K562 (cell line): ENCODE measurements at regions of chr12 and their contacts with region 1.

Region 1: DNA sequence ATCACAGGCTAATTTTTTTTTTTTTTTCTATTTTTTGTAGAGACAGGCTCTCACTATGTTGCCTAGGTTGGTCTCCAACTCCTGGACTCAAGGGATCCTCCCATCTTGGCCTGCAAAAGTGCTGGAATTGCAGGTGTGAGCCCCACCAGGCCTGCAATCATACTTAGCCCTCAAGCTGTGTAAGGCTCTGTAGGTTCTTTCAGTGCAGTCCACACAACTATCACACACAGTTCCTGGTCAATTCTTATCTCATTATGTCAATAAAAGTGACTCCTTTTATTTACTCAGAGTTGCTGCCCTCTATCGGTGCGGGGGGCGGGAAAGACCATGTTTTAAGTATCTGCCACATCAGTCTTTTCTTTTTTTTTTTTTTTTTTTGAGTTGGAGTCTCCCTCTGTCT is 29.0 kb downstream of the SLC2A3 start:
- DNase-seq: peak; percentile 38 to 74 (median 63)
- ATAC-seq: peak; percentile 92
- H3K4me3 ChIP-seq: no peak overlapping the region
- H3K27ac ChIP-seq: no peak overlapping the region
- H3K4me1 ChIP-seq: peaks cover 3 to 6% of the 10 kb centered on the region in 2 experiments; a peak in 3 of 5 replicates
- H3K27me3 ChIP-seq: no peaks in the 10 kb centered on the region
- CTCF ChIP-seq: peak; percentile 38 to 71 (median 61); a peak in 5 of 6 replicates
- EP300 ChIP-seq: 0 out of 2 replicates have a peak, but pooled peaks have one; percentile 18
- POLR2A ChIP-seq: no peak
- RAD21 ChIP-seq: peak in 1 of 2 experiments; percentile 38; a peak in 2 of 4 replicates

Region 2: GRCh38 chr12:7769999-7770398 is 137.0 kb before region 1 on chr12:
- CTCF ChIA-PET with region 1: no interaction called
- POLR2A ChIA-PET with region 1: no interaction called
- in situ Hi-C with region 1: no loop called
- intact Hi-C with region 1: no loop called
- DNase-seq: no peak
- ATAC-seq: no peak
- H3K4me3 ChIP-seq: no peak overlapping the region
- H3K27ac ChIP-seq: no peak overlapping the region
- H3K4me1 ChIP-seq: no peaks in the 10 kb centered on the region; a peak in 1 of 5 replicates
- H3K27me3 ChIP-seq: peaks cover 2 to 8% of the 10 kb centered on the region in 2 experiments; a peak in 3 of 5 replicates
- CTCF ChIP-seq: no peak
- EP300 ChIP-seq: no peak
- POLR2A ChIP-seq: no peak
- RAD21 ChIP-seq: no peak

Region 3: GRCh38 chr12:7797698-7798398 is 109.2 kb before region 1 on chr12:
- CTCF ChIA-PET with region 1: no interaction called
- POLR2A ChIA-PET with region 1: interaction called, 5 read pairs
- in situ Hi-C with region 1: no loop called
- intact Hi-C with region 1: loop called (anchors 5 kb)
- DNase-seq: no peak
- ATAC-seq: no peak
- H3K4me3 ChIP-seq: no peak overlapping the region
- H3K27ac ChIP-seq: no peak overlapping the region
- H3K4me1 ChIP-seq: no peaks in the 10 kb centered on the region
- H3K27me3 ChIP-seq: peaks cover 0 to 6% of the 10 kb centered on the region in 2 experiments; a peak in 2 of 5 replicates
- CTCF ChIP-seq: no peak
- EP300 ChIP-seq: no peak
- POLR2A ChIP-seq: no peak
- RAD21 ChIP-seq: no peak

Region 4: DNA sequence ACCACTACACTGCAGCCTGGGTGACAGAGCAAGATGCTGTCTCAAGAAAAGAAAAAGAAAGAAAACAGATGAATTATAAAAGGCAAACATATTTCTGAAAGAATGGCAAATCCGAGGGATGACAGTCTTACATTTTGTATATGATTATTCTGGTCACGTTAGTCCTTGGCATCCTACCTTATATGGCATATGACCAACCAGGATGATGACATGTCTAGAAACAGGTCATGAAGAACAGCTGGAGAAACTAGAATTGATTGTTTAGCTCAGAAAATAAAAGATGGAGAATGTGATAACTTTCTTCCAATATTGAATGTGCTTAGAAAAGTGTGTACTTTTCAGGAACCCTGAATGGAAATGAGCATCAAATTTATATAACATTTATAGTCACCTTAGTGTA is 53.5 kb before region 1 on chr12:
- CTCF ChIA-PET with region 1: no interaction called
- POLR2A ChIA-PET with region 1: no interaction called
- in situ Hi-C with region 1: loop called (anchors 5 kb)
- intact Hi-C with region 1: no loop called
- DNase-seq: no peak
- ATAC-seq: no peak
- H3K4me3 ChIP-seq: no peak overlapping the region
- H3K27ac ChIP-seq: no peak overlapping the region
- H3K4me1 ChIP-seq: peaks cover 0 to 3% of the 10 kb centered on the region in 2 experiments; a peak in 1 of 5 replicates
- H3K27me3 ChIP-seq: no peaks in the 10 kb centered on the region
- CTCF ChIP-seq: no peak
- EP300 ChIP-seq: no peak
- POLR2A ChIP-seq: no peak
- RAD21 ChIP-seq: no peak

Region 5: DNA sequence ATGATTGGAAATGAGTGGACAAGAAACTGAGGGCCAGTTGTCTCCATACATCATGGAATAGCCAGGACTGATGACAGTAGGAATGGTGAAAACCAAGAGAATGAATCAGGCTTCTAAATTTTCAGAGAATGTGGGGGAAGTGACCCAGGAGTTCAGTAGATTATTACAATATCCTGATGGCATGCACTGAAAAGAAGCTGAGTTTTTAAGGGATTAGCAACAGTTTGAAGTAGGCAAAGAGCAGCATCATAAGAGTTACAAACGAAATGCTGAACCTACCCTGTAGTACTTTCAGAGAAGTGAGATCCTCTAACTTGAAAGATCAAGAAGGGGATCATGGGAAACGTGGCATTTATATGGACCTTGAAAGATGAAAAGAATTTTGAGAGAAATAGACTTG is 47.5 kb before region 1 on chr12:
- CTCF ChIA-PET with region 1: interaction called, 5 read pairs
- POLR2A ChIA-PET with region 1: no interaction called
- in situ Hi-C with region 1: loop called (anchors 5 kb)
- intact Hi-C with region 1: loop called (anchors 2 kb)
- DNase-seq: no peak
- ATAC-seq: no peak
- H3K4me3 ChIP-seq: no peak overlapping the region
- H3K27ac ChIP-seq: no peak overlapping the region
- H3K4me1 ChIP-seq: peaks cover under 1 to 3% of the 10 kb centered on the region in 2 experiments; a peak in 2 of 5 replicates
- H3K27me3 ChIP-seq: no peaks in the 10 kb centered on the region
- CTCF ChIP-seq: no peak
- EP300 ChIP-seq: no peak
- POLR2A ChIP-seq: no peak
- RAD21 ChIP-seq: no peak

Region 6: GRCh38 chr12:7892186-7892980 is 14.6 kb before region 1 on chr12:
- CTCF ChIA-PET with region 1: no interaction called
- POLR2A ChIA-PET with region 1: interaction called, 10 read pairs
- in situ Hi-C with region 1: no loop called
- intact Hi-C with region 1: no loop called
- DNase-seq: no peak
- ATAC-seq: no peak
- H3K4me3 ChIP-seq: no peak overlapping the region
- H3K27ac ChIP-seq: no peak overlapping the region
- H3K4me1 ChIP-seq: peaks cover 0 to 4% of the 10 kb centered on the region in 2 experiments; a peak in 2 of 5 replicates
- H3K27me3 ChIP-seq: no peaks in the 10 kb centered on the region
- CTCF ChIP-seq: no peak
- EP300 ChIP-seq: no peak
- POLR2A ChIP-seq: no peak
- RAD21 ChIP-seq: no peak

Region 7: DNA sequence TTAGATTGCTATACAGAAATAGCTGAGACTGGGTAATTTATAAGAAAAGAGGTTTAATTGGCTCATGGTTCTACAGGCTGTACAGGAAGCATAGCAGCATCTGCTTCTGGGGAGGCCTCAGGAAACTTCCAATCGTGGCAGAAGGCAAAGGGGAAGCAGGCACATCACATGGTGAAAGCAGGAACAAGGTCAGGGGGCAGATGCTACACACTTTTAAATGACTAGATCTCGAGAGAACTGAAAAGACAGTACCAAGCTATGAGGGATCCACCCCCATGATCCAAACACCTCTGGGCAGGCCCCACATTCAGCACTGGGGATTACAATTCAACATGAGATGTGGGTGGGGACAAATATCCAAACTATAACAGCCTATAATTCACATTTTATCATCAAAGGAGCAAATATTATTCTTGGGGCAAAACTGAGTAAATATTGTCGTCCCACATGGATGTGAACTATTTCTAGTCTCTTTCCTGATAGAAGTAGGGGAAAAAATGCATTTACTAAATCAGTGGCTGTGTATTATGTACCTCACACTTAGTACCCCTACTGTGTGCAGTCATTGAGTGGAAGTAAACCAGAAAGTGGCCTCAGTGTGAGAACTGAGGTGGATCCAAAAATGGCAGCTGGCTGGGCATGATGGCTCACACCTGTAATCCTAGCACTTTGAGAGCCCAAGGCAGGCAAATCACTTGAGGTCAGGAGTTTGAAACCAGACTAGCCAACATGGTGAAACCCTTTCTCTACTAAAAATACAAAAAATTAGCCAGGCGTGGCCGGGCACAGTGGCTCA is 890.0 kb after region 1 on chr12:
- CTCF ChIA-PET with region 1: no interaction called
- POLR2A ChIA-PET with region 1: no interaction called
- in situ Hi-C with region 1: no loop called
- intact Hi-C with region 1: no loop called
- DNase-seq: no peak
- ATAC-seq: no peak
- H3K4me3 ChIP-seq: no peak overlapping the region
- H3K27ac ChIP-seq: no peak overlapping the region
- H3K4me1 ChIP-seq: no peaks in the 10 kb centered on the region
- H3K27me3 ChIP-seq: no peaks in the 10 kb centered on the region
- CTCF ChIP-seq: no peak
- EP300 ChIP-seq: no peak
- POLR2A ChIP-seq: no peak
- RAD21 ChIP-seq: no peak